SK-N-SH (cell line): ENCODE measurements at regions of chr10 and their contacts with region 1.

Region 1: DNA sequence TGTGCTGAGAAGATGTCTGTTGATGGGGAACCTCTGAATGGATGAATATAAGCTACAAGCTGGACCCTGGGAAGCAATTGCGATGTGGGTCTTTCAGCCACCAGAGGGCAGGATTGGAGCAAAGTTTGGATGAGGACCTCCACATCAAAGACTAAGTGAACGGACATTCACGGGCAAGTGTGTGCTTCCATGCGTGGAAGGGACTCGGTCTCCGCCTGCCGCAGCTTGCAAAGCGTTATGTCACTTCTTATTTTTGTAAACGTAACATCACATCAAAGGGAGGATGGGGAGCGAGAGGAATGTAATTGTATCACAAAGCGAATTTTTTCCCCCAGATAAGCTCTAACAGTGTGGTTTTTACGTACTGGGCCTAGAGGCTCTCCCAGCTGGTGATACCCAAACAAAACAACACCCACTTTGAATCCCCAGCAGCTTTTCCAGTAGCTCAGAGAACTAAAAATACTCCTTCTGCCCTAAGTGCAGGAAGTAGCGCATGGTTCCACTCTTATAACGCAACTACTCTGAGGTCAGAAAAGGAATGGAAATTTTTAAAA is 65.0 kb downstream of the VWA2 start:
- DNase-seq: peak; percentile 86
- H3K4me3 ChIP-seq: peak overlapping the region; percentile 65 to 74
- H3K27ac ChIP-seq: peak overlapping the region; percentile 38 to 60; a peak in 3 of 4 replicates
- H3K4me1 ChIP-seq: peaks cover 0 to 11% of the 10 kb centered on the region in 2 experiments; a peak in 1 of 4 replicates
- H3K27me3 ChIP-seq: no peaks in the 10 kb centered on the region
- CTCF ChIP-seq: peak; percentile 80
- EP300 ChIP-seq: no peak
- RAD21 ChIP-seq: peak; percentile 96

Region 2: GRCh38 chr10:114166084-114166483 is 138.0 kb before region 1 on chr10:
- CTCF ChIA-PET with region 1: no interaction called
- POLR2A ChIA-PET with region 1: no interaction called
- DNase-seq: no peak
- H3K4me3 ChIP-seq: no peak overlapping the region
- H3K27ac ChIP-seq: no peak overlapping the region
- H3K4me1 ChIP-seq: no peaks in the 10 kb centered on the region; a peak in 1 of 4 replicates
- H3K27me3 ChIP-seq: no peaks in the 10 kb centered on the region
- CTCF ChIP-seq: no peak
- EP300 ChIP-seq: no peak
- RAD21 ChIP-seq: no peak

Region 3: GRCh38 chr10:114285961-114286441 is 18.1 kb before region 1 on chr10:
- CTCF ChIA-PET with region 1: interaction called, 37 read pairs
- POLR2A ChIA-PET with region 1: no interaction called
- DNase-seq: no peak
- H3K4me3 ChIP-seq: no peak overlapping the region
- H3K27ac ChIP-seq: no peak overlapping the region
- H3K4me1 ChIP-seq: peaks cover 0 to 7% of the 10 kb centered on the region in 2 experiments; a peak in 1 of 4 replicates
- H3K27me3 ChIP-seq: no peaks in the 10 kb centered on the region
- CTCF ChIP-seq: no peak
- EP300 ChIP-seq: no peak
- RAD21 ChIP-seq: no peak

Region 4: DNA sequence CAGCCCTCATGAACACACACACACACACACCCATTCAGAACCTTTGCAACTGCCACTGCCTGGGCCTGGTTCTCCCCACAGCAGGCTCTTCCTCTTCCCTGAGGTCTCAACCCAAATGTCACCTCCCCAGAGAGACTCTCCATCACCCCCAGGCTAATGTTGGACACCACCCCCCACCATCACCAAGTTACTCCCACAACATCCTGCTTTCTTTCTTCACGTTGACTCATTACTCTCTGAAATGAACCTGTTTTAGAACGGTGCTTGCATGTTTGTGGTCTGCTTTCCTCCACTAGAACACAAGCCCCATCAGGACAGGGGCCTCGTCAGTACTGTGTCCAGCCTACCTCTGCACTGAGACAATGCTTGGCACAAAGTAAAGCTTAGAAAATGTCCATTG is 84.2 kb after region 1 on chr10:
- CTCF ChIA-PET with region 1: interaction called, 16 read pairs
- POLR2A ChIA-PET with region 1: no interaction called
- DNase-seq: no peak
- H3K4me3 ChIP-seq: no peak overlapping the region
- H3K27ac ChIP-seq: no peak overlapping the region
- H3K4me1 ChIP-seq: no peaks in the 10 kb centered on the region; a peak in 1 of 4 replicates
- H3K27me3 ChIP-seq: no peaks in the 10 kb centered on the region
- CTCF ChIP-seq: no peak
- EP300 ChIP-seq: no peak
- RAD21 ChIP-seq: no peak

Region 5: DNA sequence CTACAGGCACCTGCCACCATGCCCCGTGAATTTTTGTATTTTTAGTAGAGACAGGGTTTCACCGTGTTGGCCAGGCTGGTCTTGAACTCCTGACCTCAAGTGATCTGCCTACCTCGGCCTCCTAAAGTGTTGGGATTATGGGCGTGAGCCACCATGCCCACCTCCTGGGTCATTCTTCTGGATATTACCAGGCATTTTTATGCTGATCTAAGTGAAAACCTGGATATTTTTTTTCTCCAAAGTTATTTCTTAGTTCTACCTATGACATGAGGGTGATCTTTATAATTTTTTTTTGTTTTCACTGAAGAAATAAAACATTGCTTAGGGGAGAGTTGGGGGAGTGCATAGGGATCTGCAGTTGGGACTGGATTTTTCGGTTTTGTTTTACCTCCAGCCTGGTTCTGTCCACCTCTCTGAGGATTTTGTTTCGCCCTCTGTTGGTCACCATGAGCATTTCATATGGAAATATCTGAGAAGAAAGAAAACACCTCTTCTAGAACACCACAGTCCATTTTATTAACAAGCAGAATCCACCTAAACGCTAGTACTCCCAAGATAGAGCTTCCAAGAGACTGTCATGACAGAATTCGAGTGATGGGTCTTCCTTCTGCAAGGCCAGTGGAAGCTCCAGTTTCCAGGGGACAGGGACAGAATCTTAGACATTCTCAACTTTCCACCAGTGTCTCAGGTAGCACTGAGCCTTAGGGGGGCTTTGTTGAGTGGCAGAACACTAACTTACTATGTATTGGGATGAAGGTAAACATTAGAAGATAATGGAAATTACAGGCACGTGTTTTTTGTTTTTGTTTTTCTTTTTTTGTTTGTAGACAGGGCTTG is 133.6 kb after region 1 on chr10:
- CTCF ChIA-PET with region 1: interaction called, 25 read pairs
- POLR2A ChIA-PET with region 1: interaction called, 4 read pairs
- DNase-seq: peak; percentile 27
- H3K4me3 ChIP-seq: no peak overlapping the region
- H3K27ac ChIP-seq: no peak overlapping the region
- H3K4me1 ChIP-seq: peaks cover 0 to 3% of the 10 kb centered on the region in 2 experiments; a peak in 1 of 4 replicates
- H3K27me3 ChIP-seq: no peaks in the 10 kb centered on the region
- CTCF ChIP-seq: peak; percentile 54
- EP300 ChIP-seq: no peak
- RAD21 ChIP-seq: peak; percentile 49

Region 6: GRCh38 chr10:114470956-114471905 is 167.1 kb after region 1 on chr10:
- CTCF ChIA-PET with region 1: interaction called, 46 read pairs
- POLR2A ChIA-PET with region 1: no interaction called
- DNase-seq: peak; percentile 76
- H3K4me3 ChIP-seq: no peak overlapping the region; a peak in 1 of 4 replicates
- H3K27ac ChIP-seq: no peak overlapping the region
- H3K4me1 ChIP-seq: no peaks in the 10 kb centered on the region
- H3K27me3 ChIP-seq: no peaks in the 10 kb centered on the region
- CTCF ChIP-seq: peak; percentile 84
- EP300 ChIP-seq: no peak
- RAD21 ChIP-seq: peak; percentile 91

Region 7: GRCh38 chr10:114541081-114541796 is 237.1 kb after region 1 on chr10:
- CTCF ChIA-PET with region 1: interaction called, 34 read pairs
- POLR2A ChIA-PET with region 1: interaction called, 3 read pairs
- DNase-seq: no peak
- H3K4me3 ChIP-seq: no peak overlapping the region
- H3K27ac ChIP-seq: no peak overlapping the region
- H3K4me1 ChIP-seq: no peaks in the 10 kb centered on the region
- H3K27me3 ChIP-seq: no peaks in the 10 kb centered on the region
- CTCF ChIP-seq: no peak
- EP300 ChIP-seq: no peak
- RAD21 ChIP-seq: no peak

Region 8: DNA sequence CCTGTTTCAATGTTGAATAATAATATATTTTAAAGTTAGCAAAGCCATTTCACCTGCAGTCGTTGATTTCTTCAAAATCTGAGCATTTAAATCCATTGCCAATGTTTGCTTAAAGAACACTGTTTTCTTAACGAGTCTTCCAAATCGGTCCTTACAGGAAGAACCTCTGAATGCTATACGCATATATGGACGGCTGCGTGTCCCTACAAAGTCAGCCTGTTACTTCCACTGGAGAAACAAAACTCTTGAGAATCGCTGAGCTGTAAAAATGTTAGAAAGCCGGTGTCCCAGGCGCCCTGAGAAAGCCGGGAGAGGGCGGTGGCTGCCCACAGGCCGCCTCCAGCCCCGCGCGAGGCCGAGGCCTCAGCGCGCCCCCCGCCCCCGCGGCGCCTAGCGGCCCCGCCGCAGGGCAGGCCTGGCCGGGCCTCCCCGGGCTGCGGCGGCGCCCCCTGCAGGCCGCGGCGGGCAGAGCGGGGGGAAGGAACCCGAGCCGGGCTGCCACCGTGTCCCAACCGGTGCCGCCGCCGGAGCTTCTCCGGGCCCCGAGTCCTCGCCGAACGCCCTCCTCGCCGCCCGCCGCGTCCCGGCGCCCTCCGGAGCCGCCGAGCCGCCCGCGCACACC is 517.3 kb after region 1 on chr10 and contains the start of gene FHIP2A:
- CTCF ChIA-PET with region 1: interaction called, 10 read pairs
- POLR2A ChIA-PET with region 1: no interaction called
- DNase-seq: peak; percentile 96
- H3K4me3 ChIP-seq: peak within 1 kb of the TSS; percentile 71 to 87
- H3K27ac ChIP-seq: peak within 1 kb of the TSS; percentile 88 to 99
- H3K4me1 ChIP-seq: peaks cover 0 to 13% of the 10 kb centered on the region in 2 experiments
- H3K27me3 ChIP-seq: no peaks in the 10 kb centered on the region
- CTCF ChIP-seq: peak; percentile 39
- EP300 ChIP-seq: no peak
- RAD21 ChIP-seq: no peak; the same call in none of the 2 replicates
- polyA plus RNA-seq, gene FHIP2A: 6.1 and 9.1 TPM in 2 replicates